ENCODE measurements at regions of chr11 and their contacts with region 1.

Region 1: GRCh38 chr11:304915-305843 is 2.4 kb upstream of the IFITM2 start:
- DNase-seq: peak; percentile 73
- H3K4me3 Mint-ChIP-seq: no peak overlapping the region
- H3K27ac Mint-ChIP-seq: no peak overlapping the region
- H3K4me1 Mint-ChIP-seq: peaks cover 33% of the 10 kb centered on the region
- H3K27me3 Mint-ChIP-seq: peaks cover 11% of the 10 kb centered on the region

Region 2: GRCh38 chr11:355581-356458 is 50.6 kb after region 1 on chr11:
- CTCF ChIA-PET with region 1: interaction called, 32 read pairs
- POLR2A ChIA-PET with region 1: interaction called, 17 read pairs
- DNase-seq: peak; percentile 89
- H3K4me3 Mint-ChIP-seq: peak overlapping the region; percentile 88
- H3K27ac Mint-ChIP-seq: peak overlapping the region; percentile 95
- H3K4me1 Mint-ChIP-seq: peaks cover 41% of the 10 kb centered on the region
- H3K27me3 Mint-ChIP-seq: peaks cover 12% of the 10 kb centered on the region

Region 3: DNA sequence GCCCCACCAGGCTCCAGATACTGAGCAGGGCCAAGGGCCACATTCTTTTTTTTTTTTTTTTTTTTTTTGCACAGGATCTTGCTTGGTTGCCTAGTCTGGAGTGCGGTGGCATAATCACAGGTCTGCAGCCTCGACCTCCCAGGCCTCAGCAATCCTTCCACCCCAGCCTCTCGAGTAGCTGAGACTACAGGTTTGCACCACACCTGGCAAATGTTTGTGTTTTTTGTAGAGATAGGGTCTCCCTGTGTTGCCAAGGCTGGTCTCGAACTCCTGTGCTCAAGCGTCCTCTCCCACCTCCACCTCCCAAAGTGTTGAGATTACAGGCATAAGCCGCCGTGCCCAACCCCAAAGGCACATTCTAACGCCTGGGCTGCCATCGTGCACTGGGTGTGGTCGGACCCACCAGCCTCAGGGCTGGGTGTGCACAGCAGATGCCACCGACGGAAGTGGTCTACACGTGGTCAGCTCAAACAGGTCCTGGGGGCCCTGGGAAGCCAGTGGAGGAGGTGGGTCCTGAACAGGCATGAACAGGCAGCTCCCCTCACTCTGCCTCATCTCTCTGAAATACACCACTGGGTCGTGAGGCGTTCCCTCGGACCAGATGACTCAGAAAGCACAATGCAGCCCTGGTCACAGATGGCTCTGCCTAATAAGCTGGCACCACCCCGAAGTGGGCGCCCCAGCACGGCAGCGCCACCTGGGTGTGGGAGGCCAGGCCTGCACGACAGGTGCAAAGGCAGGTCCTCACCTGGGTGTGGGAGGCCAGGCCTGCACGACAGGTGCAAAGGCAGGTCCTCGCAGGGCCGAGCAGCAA is 59.0 kb after region 1 on chr11:
- CTCF ChIA-PET with region 1: interaction called, 32 read pairs
- POLR2A ChIA-PET with region 1: interaction called, 8 read pairs
- DNase-seq: peak; percentile 62
- H3K4me3 Mint-ChIP-seq: no peak overlapping the region
- H3K27ac Mint-ChIP-seq: no peak overlapping the region
- H3K4me1 Mint-ChIP-seq: peaks cover 9% of the 10 kb centered on the region
- H3K27me3 Mint-ChIP-seq: peaks cover 38% of the 10 kb centered on the region

Region 4: GRCh38 chr11:396948-397548 is 91.9 kb after region 1 on chr11:
- CTCF ChIA-PET with region 1: interaction called, 11 read pairs
- POLR2A ChIA-PET with region 1: no interaction called
- DNase-seq: peak; percentile 60
- H3K4me3 Mint-ChIP-seq: no peak overlapping the region
- H3K27ac Mint-ChIP-seq: no peak overlapping the region
- H3K4me1 Mint-ChIP-seq: peaks cover 4% of the 10 kb centered on the region
- H3K27me3 Mint-ChIP-seq: no peaks in the 10 kb centered on the region